ENCODE measurements at regions of chr19 and their contacts with region 1.

Region 1: GRCh38 chr19:13012690-13013608 is 17.7 kb downstream of the NFIX start:
- DNase-seq: no peak
- H3K4me3 ChIP-seq: peak overlapping the region; percentile 38
- H3K27me3 ChIP-seq: no peaks in the 10 kb centered on the region
- CTCF ChIP-seq: no peak

Region 2: GRCh38 chr19:12314553-12314952 is 698.4 kb before region 1 on chr19:
- CTCF ChIA-PET with region 1: no interaction called
- POLR2A ChIA-PET with region 1: no interaction called
- DNase-seq: no peak
- H3K4me3 ChIP-seq: no peak overlapping the region
- H3K27me3 ChIP-seq: no peaks in the 10 kb centered on the region
- CTCF ChIP-seq: no peak

Region 3: DNA sequence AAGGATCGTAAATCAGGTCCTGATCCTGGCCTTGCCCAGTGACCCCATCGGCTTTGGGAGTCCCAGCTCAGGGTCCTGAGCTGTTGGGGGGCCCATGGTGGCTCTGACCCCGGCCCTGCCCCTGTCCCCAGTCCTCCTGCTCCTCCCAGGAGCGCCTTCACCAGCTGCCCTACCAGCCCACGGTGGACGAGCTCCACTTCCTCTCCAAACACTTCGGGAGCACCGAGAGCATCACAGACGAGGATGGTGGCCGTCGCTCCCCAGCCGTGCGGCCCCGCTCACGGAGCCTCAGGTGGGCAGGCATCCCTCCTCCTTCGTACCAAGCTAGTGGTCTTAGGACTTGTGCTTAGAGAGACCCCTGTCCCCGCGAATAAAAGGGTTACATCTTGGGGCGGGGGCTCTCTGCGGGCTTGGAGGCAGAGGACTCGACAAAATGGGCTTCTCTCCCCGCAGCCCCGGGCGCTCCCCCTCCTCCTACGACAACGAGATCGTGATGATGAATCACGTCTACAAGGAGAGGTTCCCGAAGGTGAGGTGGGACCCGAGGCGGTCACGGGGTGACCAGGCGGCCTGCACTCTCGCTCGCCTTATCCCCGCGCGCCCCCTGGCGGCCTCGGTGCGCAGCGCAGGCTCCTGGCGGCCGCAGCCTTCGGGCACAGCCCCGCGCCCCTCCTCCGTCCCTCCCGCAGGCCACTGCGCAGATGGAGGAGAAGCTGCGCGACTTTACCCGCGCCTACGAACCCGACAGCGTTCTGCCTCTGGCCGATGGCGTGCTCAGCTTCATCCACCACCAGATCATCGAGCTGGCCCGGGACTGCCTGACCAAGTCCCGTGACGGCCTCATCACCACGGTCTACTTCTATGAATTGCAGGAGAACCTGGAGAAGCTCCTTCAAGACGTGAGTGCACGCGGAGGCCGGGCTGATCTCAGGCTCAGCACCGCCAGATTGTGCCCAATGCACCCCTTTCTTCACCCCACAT is 165.5 kb before region 1 on chr19:
- CTCF ChIA-PET with region 1: no interaction called
- POLR2A ChIA-PET with region 1: no interaction called
- DNase-seq: peak; percentile 16
- H3K4me3 ChIP-seq: peak overlapping the region; percentile 9; the same call in 1 of the 2 replicates
- H3K27me3 ChIP-seq: peaks cover 2% of the 10 kb centered on the region; the same call in 1 of the 2 replicates
- CTCF ChIP-seq: peak; percentile 77

Region 4: GRCh38 chr19:12938234-12939025 is 74.5 kb before region 1 on chr19 and contains the start of gene CALR:
- CTCF ChIA-PET with region 1: no interaction called
- POLR2A ChIA-PET with region 1: no interaction called
- DNase-seq: peak; percentile 94
- H3K4me3 ChIP-seq: peak within 1 kb of the TSS; percentile 92
- H3K27me3 ChIP-seq: no peaks in the 10 kb centered on the region
- CTCF ChIP-seq: peak; percentile 43
- polyA plus RNA-seq, gene CALR: 1,647 and 1,829 TPM in 2 replicates

Region 5: GRCh38 chr19:13022859-13023636 is 10.1 kb after region 1 on chr19:
- CTCF ChIA-PET with region 1: interaction called, 7 read pairs
- POLR2A ChIA-PET with region 1: interaction called, 19 read pairs
- DNase-seq: peak; percentile 89
- H3K4me3 ChIP-seq: peak overlapping the region; percentile 43
- H3K27me3 ChIP-seq: no peaks in the 10 kb centered on the region
- CTCF ChIP-seq: no peak

Region 6: GRCh38 chr19:13190781-13191540 is 178.0 kb after region 1 on chr19:
- CTCF ChIA-PET with region 1: no interaction called
- POLR2A ChIA-PET with region 1: no interaction called
- DNase-seq: no peak
- H3K4me3 ChIP-seq: no peak overlapping the region
- H3K27me3 ChIP-seq: no peaks in the 10 kb centered on the region
- CTCF ChIP-seq: no peak